ENCODE measurements at regions of chr4 and their contacts with region 1.

Region 1: DNA sequence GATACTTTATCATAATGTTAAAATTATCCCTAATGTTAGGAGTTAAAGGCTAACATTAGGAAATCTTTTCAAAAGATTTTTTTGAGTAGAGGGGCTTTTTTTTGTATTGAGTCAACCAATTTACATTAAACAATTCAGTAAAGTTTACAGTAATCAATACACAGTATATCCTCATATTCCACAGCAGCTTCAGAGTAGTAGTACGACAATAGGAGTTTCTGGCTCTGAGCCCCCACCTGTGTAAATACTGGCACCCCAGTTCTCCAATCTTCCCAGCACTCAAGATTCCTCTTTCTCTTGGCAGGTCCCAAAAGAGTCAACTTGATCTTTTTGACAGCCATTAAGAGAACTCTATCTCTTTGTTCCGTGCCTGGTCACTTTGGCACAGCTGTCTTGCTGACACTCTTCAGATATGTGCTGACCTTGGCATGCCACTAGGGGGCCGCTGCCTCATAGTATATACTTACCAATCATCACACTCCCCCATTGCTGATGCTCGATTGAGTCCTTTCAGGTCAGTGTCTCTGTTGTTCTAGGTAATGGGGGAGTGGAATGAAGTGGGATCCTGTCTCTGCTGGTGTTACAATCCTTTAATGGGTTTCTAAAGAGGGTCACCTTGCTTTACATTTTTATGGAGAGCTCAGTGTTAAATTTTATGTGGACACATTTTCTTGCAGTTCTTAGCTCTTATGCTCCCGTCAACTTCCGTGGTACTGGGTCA is 19.5 kb upstream of the CCNI start:
- DNase-seq: peak; percentile 71
- H3K4me3 ChIP-seq: peak overlapping the region in 1 of 2 experiments; percentile 14; a peak in 1 of 4 replicates
- H3K27ac ChIP-seq: no peak overlapping the region
- H3K4me1 ChIP-seq: peaks cover 0 to 6% of the 10 kb centered on the region in 2 experiments; a peak in 2 of 4 replicates
- H3K27me3 ChIP-seq: no peaks in the 10 kb centered on the region
- CTCF ChIP-seq: peak; percentile 81
- EP300 ChIP-seq: no peak
- RAD21 ChIP-seq: peak; percentile 80

Region 2: DNA sequence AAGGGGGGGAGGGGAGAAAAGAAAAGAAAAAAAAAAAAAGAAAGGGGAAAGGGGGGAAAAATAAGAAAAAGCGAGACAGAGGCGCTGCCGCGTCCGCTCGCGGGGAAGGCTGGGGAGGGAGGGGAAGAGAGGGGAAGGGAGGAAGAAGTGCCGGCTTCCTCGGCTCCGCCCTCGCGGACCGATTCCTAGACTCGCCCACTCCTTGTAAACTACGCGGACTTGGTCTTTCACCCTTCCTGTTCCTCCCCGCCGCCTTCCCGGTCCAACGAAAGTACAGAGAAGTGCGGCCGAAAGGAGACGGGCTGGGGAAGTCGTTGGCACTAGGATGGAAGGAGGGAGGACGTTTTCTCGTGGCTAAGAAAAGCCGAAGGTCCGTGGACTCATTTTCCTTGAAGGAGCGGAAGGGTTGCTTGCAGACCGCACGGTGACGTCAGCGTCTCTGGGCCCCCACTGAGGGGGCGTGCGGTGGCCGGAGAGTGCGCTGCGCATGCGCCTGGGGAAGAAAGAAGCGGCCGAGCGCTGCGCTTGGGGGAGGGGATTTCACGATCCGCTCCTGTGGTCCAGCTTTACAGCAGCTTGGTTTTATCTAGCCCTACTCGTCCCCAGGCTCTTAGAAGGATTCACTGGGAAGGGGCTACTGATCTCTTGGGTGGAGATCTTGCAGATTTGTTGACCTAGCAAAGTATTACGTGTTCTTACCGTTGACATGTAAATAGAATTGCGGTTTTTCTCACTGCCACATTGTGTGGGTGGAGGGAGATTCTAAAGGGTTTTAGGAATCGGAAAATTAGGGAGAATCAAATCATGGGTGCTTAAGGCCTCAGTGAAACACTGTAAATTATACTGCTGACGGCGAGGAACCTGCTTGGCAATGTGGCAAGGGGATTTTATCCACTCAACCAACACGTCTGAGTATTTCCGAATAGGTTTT is 19.1 kb before region 1 on chr4 and contains the start of gene CCNI:
- CTCF ChIA-PET with region 1: interaction called, 40 read pairs
- POLR2A ChIA-PET with region 1: no interaction called
- DNase-seq: peak; percentile 94
- H3K4me3 ChIP-seq: peak within 1 kb of the TSS; percentile 68 to 83
- H3K27ac ChIP-seq: peak within 1 kb of the TSS; percentile 96 to 99
- H3K4me1 ChIP-seq: peaks cover 4 to 9% of the 10 kb centered on the region in 2 experiments; a peak in 2 of 4 replicates
- H3K27me3 ChIP-seq: no peaks in the 10 kb centered on the region
- CTCF ChIP-seq: no peak
- EP300 ChIP-seq: peak; percentile 40 to 50; a peak in 2 of 4 replicates
- RAD21 ChIP-seq: no peak
- polyA plus RNA-seq, gene CCNI: 56.8 and 61.8 TPM in 2 replicates

Region 3: GRCh38 chr4:77082886-77083608 is 12.2 kb before region 1 on chr4:
- CTCF ChIA-PET with region 1: interaction called, 40 read pairs
- POLR2A ChIA-PET with region 1: no interaction called
- DNase-seq: no peak
- H3K4me3 ChIP-seq: no peak overlapping the region
- H3K27ac ChIP-seq: no peak overlapping the region
- H3K4me1 ChIP-seq: no peaks in the 10 kb centered on the region; a peak in 1 of 4 replicates
- H3K27me3 ChIP-seq: no peaks in the 10 kb centered on the region
- CTCF ChIP-seq: no peak
- EP300 ChIP-seq: no peak
- RAD21 ChIP-seq: no peak

Region 4: GRCh38 chr4:77126809-77127208 is 31.5 kb after region 1 on chr4:
- CTCF ChIA-PET with region 1: interaction called, 10 read pairs
- POLR2A ChIA-PET with region 1: interaction called, 3 read pairs
- DNase-seq: no peak
- H3K4me3 ChIP-seq: no peak overlapping the region
- H3K27ac ChIP-seq: no peak overlapping the region
- H3K4me1 ChIP-seq: peaks cover 0 to 2% of the 10 kb centered on the region in 2 experiments; a peak in 1 of 4 replicates
- H3K27me3 ChIP-seq: no peaks in the 10 kb centered on the region; the same call in 1 of the 2 replicates
- CTCF ChIP-seq: no peak
- EP300 ChIP-seq: no peak
- RAD21 ChIP-seq: no peak

Region 5: DNA sequence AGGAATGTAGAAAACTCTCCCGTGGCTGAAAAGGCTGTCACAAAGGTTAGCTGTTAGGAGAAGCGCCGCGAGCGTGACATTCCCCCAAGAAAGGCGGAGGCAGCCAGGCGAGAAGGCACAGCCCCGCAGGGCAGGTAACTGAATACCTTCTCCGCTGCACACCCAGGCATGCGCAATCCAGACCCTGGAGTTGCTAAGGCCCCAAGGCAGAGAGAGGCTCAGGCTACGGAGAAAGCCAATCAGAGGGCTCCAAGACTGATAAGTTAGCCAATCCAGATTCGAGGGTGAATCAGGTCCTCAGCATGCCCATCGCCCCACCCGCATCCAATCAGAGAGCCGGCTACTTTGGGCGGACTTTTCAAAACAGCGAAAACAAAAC is 61.3 kb after region 1 on chr4:
- CTCF ChIA-PET with region 1: interaction called, 41 read pairs
- POLR2A ChIA-PET with region 1: interaction called, 3 read pairs
- DNase-seq: peak; percentile 91
- H3K4me3 ChIP-seq: peak overlapping the region; percentile 100
- H3K27ac ChIP-seq: peak overlapping the region; percentile 96 to 99
- H3K4me1 ChIP-seq: peaks cover 8 to 14% of the 10 kb centered on the region in 2 experiments; a peak in 2 of 4 replicates
- H3K27me3 ChIP-seq: no peaks in the 10 kb centered on the region
- CTCF ChIP-seq: no peak
- EP300 ChIP-seq: peak in 1 of 2 experiments; percentile 66; a peak in 1 of 4 replicates
- RAD21 ChIP-seq: peak; percentile 5; the same call in 1 of the 2 replicates

Region 6: GRCh38 chr4:77193511-77194102 is 98.3 kb after region 1 on chr4:
- CTCF ChIA-PET with region 1: interaction called, 106 read pairs
- POLR2A ChIA-PET with region 1: no interaction called
- DNase-seq: no peak
- H3K4me3 ChIP-seq: no peak overlapping the region
- H3K27ac ChIP-seq: no peak overlapping the region
- H3K4me1 ChIP-seq: no peaks in the 10 kb centered on the region
- H3K27me3 ChIP-seq: peaks cover 20% of the 10 kb centered on the region; the same call in 1 of the 2 replicates
- CTCF ChIP-seq: no peak
- EP300 ChIP-seq: no peak
- RAD21 ChIP-seq: no peak

Measured in SK-N-SH (cell line).